Colonic mucosa (tissue), 4 donors: ENCODE measurements at regions of chr9 and their contacts with region 1.

Region 1: DNA sequence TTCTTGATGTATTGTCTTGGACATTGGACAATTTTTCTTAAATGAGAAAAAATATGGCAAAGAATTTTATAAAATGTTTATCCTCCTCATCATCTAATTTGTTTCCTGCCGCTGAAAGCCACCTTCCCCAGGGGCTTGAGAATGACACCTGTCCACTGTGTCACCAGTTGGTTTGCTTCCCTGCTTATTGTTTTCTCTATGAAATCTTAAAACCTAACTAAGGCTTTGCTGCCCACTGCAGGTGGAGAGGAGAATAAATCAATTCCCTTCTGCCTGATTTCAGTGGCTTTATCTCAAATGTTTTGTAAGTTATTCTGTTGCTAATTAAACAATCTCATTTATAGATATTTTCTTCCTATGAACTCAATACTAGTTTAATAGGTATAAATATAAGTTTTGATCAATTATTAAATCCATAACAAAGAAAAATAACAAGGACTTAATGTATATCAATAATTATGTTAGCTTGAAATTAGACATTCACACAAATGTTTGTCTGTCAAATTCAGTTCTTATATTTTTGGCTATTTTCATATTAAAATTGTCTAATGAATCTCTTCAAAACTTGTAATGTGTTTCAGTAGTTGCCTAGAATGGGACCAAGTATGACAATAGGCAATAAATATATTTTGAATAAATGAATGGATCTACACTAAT is 822.5 kb downstream of the PTPRD start:
- DNase-seq: peak; percentile 27
- H3K4me3 ChIP-seq: no peak overlapping the region
- H3K27ac ChIP-seq: no peak overlapping the region
- H3K4me1 ChIP-seq: no peaks in the 10 kb centered on the region
- H3K27me3 ChIP-seq: no peaks in the 10 kb centered on the region
- CTCF ChIP-seq: peak; percentile 72

Region 2: GRCh38 chr9:9605681-9606080 is 184.7 kb before region 1 on chr9:
- intact Hi-C with region 1: loop called (anchors 2 kb)
- DNase-seq: no peak
- H3K4me3 ChIP-seq: no peak overlapping the region
- H3K27ac ChIP-seq: no peak overlapping the region
- H3K4me1 ChIP-seq: no peaks in the 10 kb centered on the region
- H3K27me3 ChIP-seq: no peaks in the 10 kb centered on the region
- CTCF ChIP-seq: no peak

Region 3: DNA sequence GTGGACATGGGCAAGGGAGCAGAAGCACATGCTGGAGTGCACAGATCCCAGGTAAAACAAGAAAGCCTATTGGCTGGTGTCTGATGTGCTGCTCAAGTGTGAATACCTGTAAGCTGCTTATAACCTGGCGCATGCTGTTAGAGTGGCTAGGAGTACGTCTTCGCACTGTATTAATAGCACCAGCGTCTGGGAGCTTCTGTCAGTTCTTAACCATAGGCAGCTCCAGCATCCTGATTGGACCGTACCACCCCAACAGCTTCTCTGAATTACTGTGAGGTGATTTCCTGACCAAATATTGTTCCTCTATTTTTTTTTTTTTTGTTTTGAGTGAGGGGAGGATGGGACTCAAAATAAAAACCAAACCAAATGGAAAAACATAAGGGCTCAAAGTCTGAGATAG is 165.1 kb before region 1 on chr9:
- intact Hi-C with region 1: no loop called
- DNase-seq: no peak
- H3K4me3 ChIP-seq: no peak overlapping the region
- H3K27ac ChIP-seq: no peak overlapping the region
- H3K4me1 ChIP-seq: no peaks in the 10 kb centered on the region
- H3K27me3 ChIP-seq: no peaks in the 10 kb centered on the region
- CTCF ChIP-seq: no peak

Region 4: DNA sequence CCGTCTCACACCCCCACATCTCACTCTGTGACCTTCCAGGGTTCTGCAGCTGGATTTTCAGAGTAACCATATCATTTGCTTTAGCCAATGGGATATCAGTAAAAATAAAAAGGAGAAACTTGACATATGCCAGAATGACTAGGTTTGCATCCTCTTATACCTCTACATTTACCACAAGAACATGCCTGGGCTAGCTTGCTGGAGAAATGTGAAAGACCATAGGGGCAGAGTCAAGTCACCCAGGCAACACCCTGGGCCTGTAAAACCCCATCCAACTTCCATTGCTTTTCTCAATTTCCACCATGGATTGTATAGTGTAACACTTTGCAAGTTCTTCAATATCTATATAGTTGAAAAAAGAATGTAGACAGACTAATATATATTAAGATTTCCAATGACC is 91.4 kb after region 1 on chr9:
- intact Hi-C with region 1: no loop called
- DNase-seq: no peak
- H3K4me3 ChIP-seq: no peak overlapping the region
- H3K27ac ChIP-seq: no peak overlapping the region
- H3K4me1 ChIP-seq: no peaks in the 10 kb centered on the region
- H3K27me3 ChIP-seq: no peaks in the 10 kb centered on the region
- CTCF ChIP-seq: no peak

Region 5: DNA sequence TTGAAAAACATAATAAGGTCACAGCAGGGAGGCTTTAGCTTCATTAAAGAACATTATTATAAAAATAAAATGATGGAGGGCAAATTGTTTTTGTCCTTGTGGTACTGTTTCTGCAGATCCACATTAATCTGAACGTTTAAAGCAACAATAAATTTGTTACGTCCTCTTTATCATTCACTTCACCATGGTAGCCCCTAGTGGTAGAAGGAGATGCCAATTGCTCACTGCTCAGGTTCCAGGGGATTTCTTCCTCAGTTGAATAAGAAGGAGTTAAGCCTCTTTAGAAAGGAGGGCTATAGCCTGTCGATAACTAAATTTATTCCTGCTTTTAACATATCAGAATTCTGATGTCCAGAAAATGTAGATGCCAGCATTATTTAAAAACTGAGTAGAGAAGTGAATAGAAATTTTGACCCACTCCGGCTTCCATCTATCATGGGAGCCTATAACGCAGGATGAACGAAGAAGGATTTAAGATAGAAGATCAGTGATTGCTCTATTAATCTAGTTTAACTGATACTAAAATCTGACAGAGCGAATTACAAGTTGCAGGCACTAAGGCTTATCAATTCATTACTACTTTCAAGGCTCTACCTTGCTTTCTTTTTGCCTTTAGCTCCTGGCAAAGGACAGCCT is 130.2 kb after region 1 on chr9:
- intact Hi-C with region 1: no loop called
- DNase-seq: no peak
- H3K4me3 ChIP-seq: no peak overlapping the region
- H3K27ac ChIP-seq: no peak overlapping the region
- H3K4me1 ChIP-seq: no peaks in the 10 kb centered on the region
- H3K27me3 ChIP-seq: no peaks in the 10 kb centered on the region
- CTCF ChIP-seq: no peak